ENCODE measurements at regions of chr10 and their contacts with region 1.

Region 1: DNA sequence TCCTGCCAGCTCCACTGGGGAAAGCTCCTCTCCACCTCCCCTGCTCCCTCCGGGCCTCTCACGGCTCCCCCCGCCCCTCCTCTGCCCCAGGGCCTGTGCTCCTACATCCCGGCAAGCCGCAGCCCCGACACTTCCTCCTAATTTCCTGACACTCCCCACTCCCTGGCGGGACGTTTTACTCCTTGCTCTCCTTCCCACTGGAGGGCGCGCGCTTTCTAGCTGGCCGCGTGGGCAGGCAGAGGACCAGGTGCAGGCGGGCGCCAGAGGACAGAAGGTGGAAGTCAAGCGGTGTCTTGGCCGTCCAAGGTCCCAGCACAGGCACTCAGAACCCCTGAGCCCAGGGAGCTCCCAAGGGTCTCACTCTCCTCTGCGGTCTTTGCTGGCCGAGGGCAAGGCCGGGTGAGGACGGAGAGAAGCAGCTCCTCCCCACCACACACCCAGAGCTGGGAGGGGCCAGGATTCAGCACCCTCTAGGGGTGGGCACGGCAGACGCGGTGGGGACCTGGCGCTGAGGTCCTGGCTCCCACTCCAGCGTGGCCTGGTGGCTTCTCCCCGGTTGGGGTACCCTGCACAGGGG is 19.1 kb downstream of the ADAM8 start:
- DNase-seq: peak; percentile 87
- H3K4me3 Mint-ChIP-seq: peak overlapping the region; percentile 44
- H3K27ac Mint-ChIP-seq: peak overlapping the region; percentile 4
- H3K4me1 Mint-ChIP-seq: peaks cover 33% of the 10 kb centered on the region
- H3K27me3 Mint-ChIP-seq: no peaks in the 10 kb centered on the region
- CTCF ChIP-seq: peak; percentile 40

Region 2: DNA sequence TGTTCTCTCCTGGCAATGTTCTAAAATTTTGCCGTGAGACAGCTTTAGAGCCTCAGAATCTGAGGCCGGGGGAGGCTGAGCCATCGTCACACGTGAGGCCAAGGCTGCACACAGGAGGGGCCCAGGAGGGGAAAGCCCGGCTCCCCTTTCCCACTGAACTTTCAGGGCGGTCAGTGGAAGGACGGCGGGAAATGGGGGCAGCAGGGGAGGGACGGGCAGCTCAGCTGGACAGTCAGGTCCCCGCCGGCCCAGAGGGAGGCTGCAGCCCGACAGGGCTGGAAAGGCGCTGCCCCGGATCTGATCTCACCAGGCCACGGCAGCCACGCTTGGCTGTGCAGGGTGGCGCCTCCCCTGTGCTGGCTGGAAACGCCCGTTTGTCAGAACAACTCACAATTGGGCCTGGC is 213.2 kb before region 1 on chr10:
- CTCF ChIA-PET with region 1: no interaction called
- POLR2A ChIA-PET with region 1: no interaction called
- intact Hi-C with region 1: no loop called
- DNase-seq: no peak
- H3K4me3 Mint-ChIP-seq: no peak overlapping the region
- H3K27ac Mint-ChIP-seq: no peak overlapping the region
- H3K4me1 Mint-ChIP-seq: no peaks in the 10 kb centered on the region
- H3K27me3 Mint-ChIP-seq: no peaks in the 10 kb centered on the region
- CTCF ChIP-seq: no peak

Region 3: GRCh38 chr10:133139551-133140065 is 118.0 kb before region 1 on chr10:
- CTCF ChIA-PET with region 1: interaction called, 25 read pairs
- POLR2A ChIA-PET with region 1: interaction called, 4 read pairs
- intact Hi-C with region 1: loop called (anchors 5 kb)
- DNase-seq: no peak
- H3K4me3 Mint-ChIP-seq: no peak overlapping the region
- H3K27ac Mint-ChIP-seq: no peak overlapping the region
- H3K4me1 Mint-ChIP-seq: no peaks in the 10 kb centered on the region
- H3K27me3 Mint-ChIP-seq: no peaks in the 10 kb centered on the region
- CTCF ChIP-seq: no peak

Region 4: GRCh38 chr10:133278577-133279265 is 21.1 kb after region 1 on chr10:
- CTCF ChIA-PET with region 1: interaction called, 15 read pairs
- POLR2A ChIA-PET with region 1: interaction called, 45 read pairs
- intact Hi-C with region 1: loop called (anchors 2 kb)
- DNase-seq: peak; percentile 90
- H3K4me3 Mint-ChIP-seq: peak overlapping the region; percentile 48
- H3K27ac Mint-ChIP-seq: peak overlapping the region; percentile 85
- H3K4me1 Mint-ChIP-seq: peaks cover 16% of the 10 kb centered on the region
- H3K27me3 Mint-ChIP-seq: no peaks in the 10 kb centered on the region
- CTCF ChIP-seq: no peak